ENCODE measurements at regions of chr10 and their contacts with region 1.

Region 1: GRCh38 chr10:36692759-36693158 is 432.6 kb upstream of the ANKRD30A start:
- DNase-seq: no peak
- ATAC-seq: no peak
- H3K4me3 ChIP-seq: no peak overlapping the region
- H3K27ac ChIP-seq: no peak overlapping the region
- H3K4me1 ChIP-seq: no peaks in the 10 kb centered on the region
- H3K27me3 ChIP-seq: no peaks in the 10 kb centered on the region
- CTCF ChIP-seq: no peak

Region 2: DNA sequence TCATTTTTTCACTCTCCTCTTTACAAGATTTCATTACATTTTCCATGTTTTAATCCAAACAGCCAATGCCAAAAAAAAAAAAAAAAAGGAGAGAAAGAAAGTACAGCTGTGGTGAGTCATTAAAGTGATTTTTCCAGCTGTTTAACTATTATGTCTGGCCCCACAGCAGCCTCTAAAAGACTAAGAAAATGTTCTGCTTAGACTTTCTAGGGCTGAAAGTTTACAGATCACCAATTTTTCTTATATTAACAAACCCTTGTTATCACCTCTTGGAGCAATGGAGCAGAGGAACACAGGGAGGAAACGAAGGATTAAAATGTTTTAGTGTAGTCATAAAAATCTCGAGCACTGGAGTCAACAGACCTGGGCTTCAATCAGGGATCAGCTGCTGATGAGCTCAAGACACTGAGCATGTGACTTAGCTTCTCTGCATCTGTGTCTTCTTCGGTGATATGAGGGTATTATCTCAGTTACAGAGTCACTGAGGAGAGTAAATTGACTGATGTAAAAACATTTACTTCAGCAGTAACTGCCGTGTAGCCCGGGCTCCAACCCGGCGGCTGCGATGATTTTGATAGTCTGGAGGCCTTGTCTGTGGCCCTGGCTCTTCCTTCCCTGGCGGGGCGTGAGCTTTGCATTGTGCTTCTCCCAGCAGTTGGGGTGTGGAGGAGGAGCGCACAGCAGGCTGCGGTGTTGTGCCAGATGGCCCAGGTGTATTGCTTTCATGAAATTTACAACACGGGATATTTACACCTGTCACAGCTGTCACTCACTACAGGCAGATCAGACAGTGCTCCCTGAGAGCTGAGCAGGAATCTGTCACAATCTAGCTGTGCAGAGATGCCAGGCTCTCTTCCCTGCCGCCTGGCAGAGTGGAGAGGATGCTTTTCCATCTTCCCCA is 752.4 kb before region 1 on chr10:
- intact Hi-C with region 1: no loop called
- DNase-seq: no peak
- ATAC-seq: peak in 7 of 8 donors; percentile 68 to 86 (median 81)
- H3K4me3 ChIP-seq: no peak overlapping the region
- H3K27ac ChIP-seq: peak overlapping the region in 7 of 10 donors; percentile 23 to 65 (median 60)
- H3K4me1 ChIP-seq: peaks cover 0 to 21% (median 4%) of the 10 kb centered on the region in 9 donors
- H3K27me3 ChIP-seq: no peaks in the 10 kb centered on the region
- CTCF ChIP-seq: no peak

Region 3: GRCh38 chr10:37780536-37780935 is 1087.8 kb after region 1 on chr10:
- intact Hi-C with region 1: loop called in 1 of 10 experiments (anchors 5 kb)
- DNase-seq: no peak
- ATAC-seq: no peak
- H3K4me3 ChIP-seq: no peak overlapping the region
- H3K27ac ChIP-seq: no peak overlapping the region
- H3K4me1 ChIP-seq: no peaks in the 10 kb centered on the region
- H3K27me3 ChIP-seq: no peaks in the 10 kb centered on the region
- CTCF ChIP-seq: no peak

Measured in heart right ventricle (tissue), 16 donors.